A673 (cell line): ENCODE measurements at regions of chr2 and their contacts with region 1.

Region 1: GRCh38 chr2:119753041-119753929 is 6.4 kb upstream of the PTPN4 start:
- DNase-seq: peak; percentile 75
- H3K4me3 ChIP-seq: no peak overlapping the region
- H3K27ac ChIP-seq: no peak overlapping the region
- H3K4me1 ChIP-seq: no peaks in the 10 kb centered on the region
- H3K27me3 ChIP-seq: no peaks in the 10 kb centered on the region
- CTCF ChIP-seq: peak; percentile 77

Region 2: DNA sequence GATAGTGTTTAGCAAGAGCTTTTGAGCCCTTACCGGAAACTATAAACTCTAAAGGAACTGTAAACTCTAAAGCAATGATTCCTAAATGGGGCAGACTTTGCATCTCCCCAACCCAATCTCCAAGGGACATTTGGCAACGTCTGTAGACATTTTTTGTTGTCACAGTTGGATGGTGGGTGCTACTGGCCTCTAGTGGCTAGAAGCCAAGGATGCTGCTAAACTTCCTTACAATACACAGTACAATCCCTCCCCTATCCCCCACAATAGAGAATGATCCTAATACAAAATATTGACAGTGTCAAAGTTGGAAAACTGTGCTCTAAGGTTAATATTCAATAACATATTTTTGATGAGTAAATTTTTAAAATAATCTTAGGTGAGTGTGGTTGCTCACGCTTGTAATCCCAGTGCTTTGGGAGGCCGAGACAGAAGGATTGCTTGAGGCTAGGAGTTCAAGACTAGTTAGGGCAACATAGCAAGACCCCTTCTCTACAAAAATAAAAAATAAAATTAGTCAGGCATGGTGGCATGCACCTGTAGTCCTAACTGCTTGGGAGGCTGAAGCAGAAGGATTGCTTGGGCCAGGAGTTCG is 73.2 kb after region 1 on chr2:
- CTCF ChIA-PET with region 1: interaction called, 9 read pairs
- POLR2A ChIA-PET with region 1: no interaction called
- intact Hi-C with region 1: loop called (anchors 1 kb)
- DNase-seq: peak; percentile 84
- H3K4me3 ChIP-seq: no peak overlapping the region
- H3K27ac ChIP-seq: peak overlapping the region; percentile 0
- H3K4me1 ChIP-seq: peaks cover 12% of the 10 kb centered on the region
- H3K27me3 ChIP-seq: no peaks in the 10 kb centered on the region
- CTCF ChIP-seq: peak; percentile 81